ENCODE measurements at regions of chr12 and their contacts with region 1.

Region 1: GRCh38 chr12:108502922-108503321 is 12.2 kb upstream of the FICD start:
- DNase-seq: no peak
- ATAC-seq: no peak
- H3K4me3 ChIP-seq: no peak overlapping the region
- H3K27ac ChIP-seq: no peak overlapping the region
- H3K4me1 ChIP-seq: no peaks in the 10 kb centered on the region
- H3K27me3 ChIP-seq: peaks cover 0 to 18% (median 0%) of the 10 kb centered on the region in 9 donors
- CTCF ChIP-seq: no peak
- POLR2A ChIP-seq: no peak

Region 2: GRCh38 chr12:107679336-107679735 is 823.6 kb before region 1 on chr12:
- intact Hi-C with region 1: loop called in 1 of 10 experiments (anchors 5 kb)
- DNase-seq: no peak
- ATAC-seq: no peak
- H3K4me3 ChIP-seq: no peak overlapping the region
- H3K27ac ChIP-seq: no peak overlapping the region
- H3K4me1 ChIP-seq: peaks cover 0 to under 1% (median 0%) of the 10 kb centered on the region in 12 donors
- H3K27me3 ChIP-seq: peaks cover 0 to 29% (median 9%) of the 10 kb centered on the region in 9 donors
- CTCF ChIP-seq: no peak
- POLR2A ChIP-seq: no peak